WTC11 (cell line): ENCODE measurements at regions of chr17 and their contacts with region 1.

Region 1: GRCh38 chr17:64741038-64741641 is 79.0 kb upstream of the SMURF2 start:
- DNase-seq: no peak
- ATAC-seq: no peak
- H3K4me3 Mint-ChIP-seq: no peak overlapping the region
- H3K27ac Mint-ChIP-seq: no peak overlapping the region; the same call in 1 of the 2 replicates
- H3K4me1 Mint-ChIP-seq: peaks cover 9% of the 10 kb centered on the region
- H3K27me3 Mint-ChIP-seq: no peaks in the 10 kb centered on the region
- CTCF ChIP-seq: no peak

Region 2: GRCh38 chr17:64679688-64680216 is 61.4 kb before region 1 on chr17:
- CTCF ChIA-PET with region 1: no interaction called
- POLR2A ChIA-PET with region 1: no interaction called
- DNase-seq: no peak
- ATAC-seq: no peak
- H3K4me3 Mint-ChIP-seq: no peak overlapping the region
- H3K27ac Mint-ChIP-seq: no peak overlapping the region
- H3K4me1 Mint-ChIP-seq: no peaks in the 10 kb centered on the region
- H3K27me3 Mint-ChIP-seq: no peaks in the 10 kb centered on the region
- CTCF ChIP-seq: no peak

Region 3: DNA sequence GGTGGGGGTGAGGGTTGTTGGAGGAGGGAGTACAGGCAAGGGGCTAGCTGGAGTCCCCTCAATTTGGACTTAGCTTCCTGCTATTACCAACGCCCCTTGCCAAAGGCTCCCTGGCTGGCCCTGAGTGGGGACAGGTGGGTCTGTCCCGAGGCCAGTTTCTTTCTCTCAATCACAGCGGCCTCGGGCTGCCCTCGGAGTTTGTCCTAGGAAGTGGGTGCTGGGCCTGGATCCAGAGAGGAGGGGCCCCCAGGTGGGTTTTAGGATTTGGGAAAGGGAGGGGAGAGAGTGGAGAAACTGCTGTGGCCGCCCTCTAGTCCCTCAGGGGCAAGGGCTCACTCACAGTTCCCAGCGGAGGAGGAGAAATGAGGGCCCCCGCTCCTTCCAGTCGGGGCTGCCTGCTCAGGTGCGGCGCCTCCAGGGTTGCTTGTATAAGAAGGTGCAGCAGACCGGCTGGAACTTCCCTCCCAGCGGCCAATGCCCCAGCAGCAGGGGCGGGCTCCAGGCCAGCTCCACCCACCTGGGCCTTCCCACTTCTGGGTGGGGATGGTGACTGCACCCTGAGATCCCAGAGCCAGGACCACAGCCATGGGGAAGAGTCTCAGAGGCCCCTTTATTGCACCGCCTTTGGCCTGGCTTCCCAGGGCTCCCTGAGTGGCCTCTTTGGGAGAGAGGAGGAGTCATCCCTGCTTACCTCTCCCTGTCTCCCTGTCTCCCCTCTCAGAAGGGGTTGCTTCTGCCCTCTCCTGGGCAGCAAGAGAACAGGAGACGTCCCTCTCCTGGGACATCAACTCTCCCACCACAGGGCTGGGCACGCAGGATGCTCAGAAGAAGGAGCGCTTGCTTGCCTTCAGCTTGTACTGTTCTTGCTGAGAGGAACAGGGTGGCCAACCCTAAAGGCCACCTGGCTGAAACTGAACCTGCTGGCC is 33.0 kb after region 1 on chr17:
- CTCF ChIA-PET with region 1: interaction called, 20 read pairs
- POLR2A ChIA-PET with region 1: no interaction called
- DNase-seq: peak; percentile 88
- ATAC-seq: peak; percentile 78
- H3K4me3 Mint-ChIP-seq: peak overlapping the region; percentile 77
- H3K27ac Mint-ChIP-seq: no peak overlapping the region
- H3K4me1 Mint-ChIP-seq: peaks cover 19% of the 10 kb centered on the region
- H3K27me3 Mint-ChIP-seq: peaks cover 47% of the 10 kb centered on the region
- CTCF ChIP-seq: peak; percentile 48; the same call in 1 of the 2 replicates